ENCODE measurements at regions of chr19 and their contacts with region 1.

Region 1: DNA sequence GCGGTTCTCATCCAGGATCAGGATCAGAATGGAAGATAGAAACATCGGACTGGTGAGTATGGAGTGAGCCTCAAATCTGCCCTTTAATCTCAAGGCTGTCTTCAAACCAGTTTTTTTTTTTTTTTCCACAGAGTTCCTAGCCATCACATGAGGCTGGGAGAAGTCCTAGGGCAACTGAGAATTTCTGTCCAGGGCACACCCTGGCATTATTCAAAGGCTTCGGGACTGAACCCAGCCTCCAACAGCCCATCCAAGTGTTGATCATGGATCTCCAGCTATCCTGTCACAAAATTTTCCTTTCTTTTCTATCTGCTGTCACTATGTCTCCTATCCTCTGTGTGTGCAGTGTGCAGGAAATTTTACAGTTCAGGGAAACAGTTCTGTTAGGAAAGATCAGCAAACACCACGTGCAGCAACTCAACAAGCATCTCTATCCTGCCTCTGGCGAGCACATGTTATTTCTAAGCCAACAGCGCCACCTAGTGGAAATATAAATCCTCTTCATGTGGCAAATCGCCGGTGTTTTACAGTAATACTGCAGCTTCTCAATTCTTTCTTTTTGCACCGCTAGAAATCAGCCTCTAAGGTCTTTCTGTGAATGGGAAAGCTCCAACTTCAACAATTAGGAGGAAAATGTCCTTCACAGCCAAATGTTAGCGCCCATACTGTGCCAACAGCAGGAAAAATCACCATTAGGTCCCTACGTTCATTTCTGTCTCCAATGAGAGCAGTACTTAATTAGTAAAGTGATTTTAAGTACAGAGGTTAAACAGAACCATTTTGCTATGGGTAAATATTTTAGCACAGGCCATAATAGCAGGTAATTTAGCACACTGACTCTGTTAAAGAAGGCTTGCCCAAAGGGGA is 21.4 kb upstream of the ZNF181 start:
- DNase-seq: peak in 13 of 14 experiments; percentile 8 to 89 (median 41)
- ATAC-seq: peak; percentile 67
- H3K4me3 ChIP-seq: no peak overlapping the region
- H3K4me3 Mint-ChIP-seq: no peak overlapping the region
- H3K27ac ChIP-seq: no peak overlapping the region
- H3K27ac Mint-ChIP-seq: no peak overlapping the region
- H3K4me1 ChIP-seq: no peaks in the 10 kb centered on the region
- H3K4me1 Mint-ChIP-seq: no peaks in the 10 kb centered on the region
- H3K27me3 ChIP-seq: peaks cover under 1 to 13% of the 10 kb centered on the region in 2 experiments
- H3K27me3 Mint-ChIP-seq: peaks cover 40% of the 10 kb centered on the region
- CTCF ChIP-seq: peak; percentile 69

Region 2: GRCh38 chr19:34041925-34042521 is 670.6 kb before region 1 on chr19:
- CTCF ChIA-PET with region 1: no interaction called
- POLR2A ChIA-PET with region 1: no interaction called
- intact Hi-C with region 1: loop called (anchors 5 kb)
- DNase-seq: peak; percentile 51 to 79 (median 60)
- ATAC-seq: no peak
- H3K4me3 ChIP-seq: no peak overlapping the region
- H3K4me3 Mint-ChIP-seq: no peak overlapping the region
- H3K27ac ChIP-seq: no peak overlapping the region
- H3K27ac Mint-ChIP-seq: no peak overlapping the region
- H3K4me1 ChIP-seq: no peaks in the 10 kb centered on the region
- H3K4me1 Mint-ChIP-seq: no peaks in the 10 kb centered on the region
- H3K27me3 ChIP-seq: peaks cover 0 to 2% of the 10 kb centered on the region in 2 experiments
- H3K27me3 Mint-ChIP-seq: peaks cover 34% of the 10 kb centered on the region
- CTCF ChIP-seq: peak; percentile 83

Region 3: DNA sequence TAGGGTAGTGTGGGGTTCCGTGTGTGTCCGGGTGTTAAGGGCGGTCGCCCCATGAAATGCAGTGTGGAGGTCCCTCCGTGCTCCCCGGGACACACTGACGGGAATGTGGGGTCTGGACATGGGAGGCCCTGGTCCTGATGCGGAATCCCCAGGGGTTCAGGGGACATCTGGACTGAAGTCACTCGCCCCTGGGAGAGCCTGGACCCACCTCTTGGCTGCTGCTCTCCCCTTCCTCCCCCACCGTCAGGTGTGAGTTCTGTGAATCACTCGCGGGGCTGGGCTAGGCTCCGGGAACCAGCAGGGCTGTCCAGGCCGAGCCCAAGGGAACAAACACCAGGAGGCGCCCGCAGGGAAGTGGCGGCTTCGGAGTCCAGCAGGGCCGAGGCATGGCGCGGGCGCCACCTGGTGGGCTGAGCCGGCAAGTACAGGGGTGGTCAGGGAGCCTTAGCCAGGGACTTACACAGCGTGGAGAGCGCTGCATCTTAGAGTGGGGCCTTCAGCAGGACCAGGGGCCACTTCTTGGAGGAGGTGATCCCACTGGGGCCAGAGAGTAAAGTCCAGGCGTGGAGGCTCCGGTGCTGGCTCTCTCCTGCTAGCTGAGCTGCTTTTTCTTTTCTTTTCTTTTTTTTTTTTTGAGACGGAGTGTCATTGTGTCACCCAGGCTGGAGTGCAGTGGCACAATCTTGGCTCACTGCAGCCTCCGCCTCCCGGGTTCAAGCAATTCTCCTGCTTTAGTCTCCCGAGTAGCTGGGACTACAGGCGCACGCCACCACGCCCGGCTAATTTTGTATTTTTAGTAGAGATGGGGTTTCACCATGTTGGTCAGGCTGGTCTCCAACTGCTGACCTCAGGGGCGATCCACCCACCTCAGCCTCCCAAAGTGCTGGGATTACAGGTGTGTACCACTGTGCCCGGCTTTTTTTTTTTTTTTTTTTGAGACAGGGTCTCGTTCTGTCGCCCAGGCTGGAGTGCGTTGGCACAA is 211.0 kb before region 1 on chr19:
- CTCF ChIA-PET with region 1: no interaction called
- POLR2A ChIA-PET with region 1: no interaction called
- intact Hi-C with region 1: loop called in 1 of 2 experiments (anchors 1 kb)
- DNase-seq: peak; percentile 70 to 89 (median 80)
- ATAC-seq: peak; percentile 72
- H3K4me3 ChIP-seq: no peak overlapping the region
- H3K4me3 Mint-ChIP-seq: no peak overlapping the region
- H3K27ac ChIP-seq: no peak overlapping the region
- H3K27ac Mint-ChIP-seq: no peak overlapping the region
- H3K4me1 ChIP-seq: peaks cover 21% of the 10 kb centered on the region
- H3K4me1 Mint-ChIP-seq: peaks cover 9% of the 10 kb centered on the region
- H3K27me3 ChIP-seq: peaks cover 11 to 18% of the 10 kb centered on the region in 2 experiments
- H3K27me3 Mint-ChIP-seq: peaks cover 36% of the 10 kb centered on the region
- CTCF ChIP-seq: peak; percentile 92

Region 4: GRCh38 chr19:34597997-34598856 is 114.4 kb before region 1 on chr19:
- CTCF ChIA-PET with region 1: no interaction called
- POLR2A ChIA-PET with region 1: no interaction called
- intact Hi-C with region 1: no loop called
- DNase-seq: no peak
- ATAC-seq: no peak
- H3K4me3 ChIP-seq: no peak overlapping the region
- H3K4me3 Mint-ChIP-seq: no peak overlapping the region
- H3K27ac ChIP-seq: no peak overlapping the region
- H3K27ac Mint-ChIP-seq: no peak overlapping the region
- H3K4me1 ChIP-seq: no peaks in the 10 kb centered on the region
- H3K4me1 Mint-ChIP-seq: no peaks in the 10 kb centered on the region
- H3K27me3 ChIP-seq: no peaks in the 10 kb centered on the region
- H3K27me3 Mint-ChIP-seq: no peaks in the 10 kb centered on the region
- CTCF ChIP-seq: no peak

Region 5: GRCh38 chr19:34639491-34640085 is 73.0 kb before region 1 on chr19:
- CTCF ChIA-PET with region 1: interaction called, 21 read pairs
- POLR2A ChIA-PET with region 1: no interaction called
- intact Hi-C with region 1: loop called (anchors 1 kb)
- DNase-seq: peak; percentile 8 to 89 (median 52)
- ATAC-seq: peak; percentile 48
- H3K4me3 ChIP-seq: no peak overlapping the region
- H3K4me3 Mint-ChIP-seq: no peak overlapping the region
- H3K27ac ChIP-seq: no peak overlapping the region
- H3K27ac Mint-ChIP-seq: no peak overlapping the region
- H3K4me1 ChIP-seq: no peaks in the 10 kb centered on the region
- H3K4me1 Mint-ChIP-seq: no peaks in the 10 kb centered on the region
- H3K27me3 ChIP-seq: no peaks in the 10 kb centered on the region
- H3K27me3 Mint-ChIP-seq: no peaks in the 10 kb centered on the region
- CTCF ChIP-seq: peak; percentile 81

Region 6: GRCh38 chr19:34649886-34650543 is 62.6 kb before region 1 on chr19:
- CTCF ChIA-PET with region 1: no interaction called
- POLR2A ChIA-PET with region 1: no interaction called
- intact Hi-C with region 1: no loop called
- DNase-seq: no peak
- ATAC-seq: no peak
- H3K4me3 ChIP-seq: no peak overlapping the region
- H3K4me3 Mint-ChIP-seq: no peak overlapping the region
- H3K27ac ChIP-seq: no peak overlapping the region
- H3K27ac Mint-ChIP-seq: no peak overlapping the region
- H3K4me1 ChIP-seq: no peaks in the 10 kb centered on the region
- H3K4me1 Mint-ChIP-seq: no peaks in the 10 kb centered on the region
- H3K27me3 ChIP-seq: no peaks in the 10 kb centered on the region
- H3K27me3 Mint-ChIP-seq: peaks cover 3% of the 10 kb centered on the region
- CTCF ChIP-seq: no peak

Region 7: DNA sequence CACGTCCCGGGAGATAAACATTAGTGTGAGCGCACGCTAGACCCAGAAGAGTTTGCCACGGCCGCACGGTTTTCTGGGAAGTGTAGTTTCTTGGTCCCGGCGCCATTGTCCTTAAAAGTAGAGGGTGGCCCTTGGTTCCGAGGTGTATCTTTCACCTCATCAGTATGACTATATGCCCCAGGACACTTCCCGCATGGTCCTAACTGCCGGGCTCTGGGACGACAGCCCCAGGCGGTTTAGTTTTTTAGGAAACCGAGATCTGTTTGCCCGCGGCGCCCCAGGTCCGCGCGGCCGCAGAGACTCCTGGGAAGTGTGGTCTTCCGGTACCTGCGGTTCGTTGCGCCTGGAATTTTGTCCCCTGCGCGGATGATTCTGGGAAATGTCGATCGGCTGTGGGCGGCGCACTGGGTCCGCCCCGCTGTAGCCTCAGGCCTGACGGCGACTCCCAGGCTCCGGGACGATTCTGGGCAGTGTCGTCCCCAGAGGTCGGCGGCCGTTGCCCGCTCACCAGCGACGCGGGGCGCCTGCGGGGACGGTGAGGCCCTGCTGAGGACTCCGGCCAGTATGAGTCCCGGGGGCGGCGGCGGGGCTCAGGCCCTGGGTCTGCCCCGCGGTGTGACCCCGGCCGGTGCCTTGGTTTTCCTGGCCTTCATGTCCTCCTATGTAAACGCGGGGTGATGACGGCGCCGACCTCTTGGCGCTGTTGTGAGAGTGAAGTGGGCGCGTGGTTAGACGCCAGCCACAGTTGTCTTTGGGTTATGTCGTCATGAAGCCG is 21.4 kb after region 1 on chr19 and contains the start of gene ZNF181:
- CTCF ChIA-PET with region 1: no interaction called
- POLR2A ChIA-PET with region 1: no interaction called
- intact Hi-C with region 1: no loop called
- DNase-seq: peak; percentile 64 to 90 (median 74)
- ATAC-seq: peak; percentile 84
- H3K4me3 ChIP-seq: peak within 1 kb of the TSS; percentile 85
- H3K4me3 Mint-ChIP-seq: peak within 1 kb of the TSS; percentile 96
- H3K27ac ChIP-seq: peak within 1 kb of the TSS; percentile 91
- H3K27ac Mint-ChIP-seq: peak within 1 kb of the TSS; percentile 92
- H3K4me1 ChIP-seq: peaks cover 28% of the 10 kb centered on the region
- H3K4me1 Mint-ChIP-seq: peaks cover 34% of the 10 kb centered on the region
- H3K27me3 ChIP-seq: no peaks in the 10 kb centered on the region
- H3K27me3 Mint-ChIP-seq: no peaks in the 10 kb centered on the region
- CTCF ChIP-seq: no peak
- total RNA-seq, gene ZNF181: 2.0 to 2.9 TPM